ENCODE measurements at regions of chr4 and their contacts with region 1.

Region 1: DNA sequence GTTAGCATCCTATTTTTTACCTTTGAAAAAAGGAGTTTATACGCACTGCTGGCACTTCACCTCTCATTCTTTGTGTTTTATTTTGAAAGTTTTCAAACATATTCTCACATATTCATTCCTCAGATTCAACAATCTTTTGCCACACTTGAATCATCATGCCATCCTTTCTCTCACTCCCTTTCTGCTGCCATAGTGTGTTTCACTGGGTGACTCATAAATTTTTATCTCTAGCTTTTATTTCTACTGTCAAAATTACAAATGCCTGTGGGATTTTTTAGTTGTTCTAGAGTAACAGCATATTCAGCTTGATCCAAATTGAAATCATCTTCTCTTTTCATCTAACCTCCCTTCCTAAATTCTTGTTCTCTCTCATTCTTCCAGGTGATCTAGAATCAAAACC is 28.0 kb downstream of the MFSD8 start:
- DNase-seq: no peak
- ATAC-seq: no peak
- H3K4me3 ChIP-seq: no peak overlapping the region
- H3K4me3 Mint-ChIP-seq: no peak overlapping the region
- H3K27ac ChIP-seq: no peak overlapping the region
- H3K27ac Mint-ChIP-seq: no peak overlapping the region
- H3K4me1 ChIP-seq: no peaks in the 10 kb centered on the region
- H3K4me1 Mint-ChIP-seq: no peaks in the 10 kb centered on the region
- H3K27me3 ChIP-seq: no peaks in the 10 kb centered on the region
- H3K27me3 Mint-ChIP-seq: no peaks in the 10 kb centered on the region

Region 2: DNA sequence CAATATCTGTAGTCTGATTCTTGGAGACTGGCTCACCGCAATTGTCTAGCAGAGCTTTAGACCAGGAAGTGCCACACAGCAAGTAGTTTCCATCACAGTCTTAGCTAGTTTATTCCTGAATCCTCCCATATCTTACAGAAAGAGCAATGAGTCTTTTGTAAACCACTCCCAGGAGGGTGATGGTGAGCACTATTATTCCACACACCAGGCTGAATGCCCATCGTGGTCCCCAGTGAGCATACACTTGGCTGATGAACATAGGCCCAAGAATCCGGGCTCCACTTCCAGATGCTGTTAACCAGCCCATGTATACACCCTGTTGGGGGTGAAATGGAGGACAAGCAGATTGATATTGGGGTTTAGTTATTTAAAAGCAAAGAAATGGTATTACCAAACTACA is 16.5 kb before region 1 on chr4:
- CTCF ChIA-PET with region 1: no interaction called
- POLR2A ChIA-PET with region 1: no interaction called
- intact Hi-C with region 1: loop called in 1 of 2 experiments (anchors 2 kb)
- DNase-seq: no peak
- ATAC-seq: no peak
- H3K4me3 ChIP-seq: no peak overlapping the region
- H3K4me3 Mint-ChIP-seq: no peak overlapping the region
- H3K27ac ChIP-seq: no peak overlapping the region
- H3K27ac Mint-ChIP-seq: no peak overlapping the region
- H3K4me1 ChIP-seq: no peaks in the 10 kb centered on the region
- H3K4me1 Mint-ChIP-seq: peaks cover 0 to 9% (median 0%) of the 10 kb centered on the region in 7 donors
- H3K27me3 ChIP-seq: no peaks in the 10 kb centered on the region
- H3K27me3 Mint-ChIP-seq: no peaks in the 10 kb centered on the region